ENCODE measurements at regions of chr10 and their contacts with region 1.

Region 1: DNA sequence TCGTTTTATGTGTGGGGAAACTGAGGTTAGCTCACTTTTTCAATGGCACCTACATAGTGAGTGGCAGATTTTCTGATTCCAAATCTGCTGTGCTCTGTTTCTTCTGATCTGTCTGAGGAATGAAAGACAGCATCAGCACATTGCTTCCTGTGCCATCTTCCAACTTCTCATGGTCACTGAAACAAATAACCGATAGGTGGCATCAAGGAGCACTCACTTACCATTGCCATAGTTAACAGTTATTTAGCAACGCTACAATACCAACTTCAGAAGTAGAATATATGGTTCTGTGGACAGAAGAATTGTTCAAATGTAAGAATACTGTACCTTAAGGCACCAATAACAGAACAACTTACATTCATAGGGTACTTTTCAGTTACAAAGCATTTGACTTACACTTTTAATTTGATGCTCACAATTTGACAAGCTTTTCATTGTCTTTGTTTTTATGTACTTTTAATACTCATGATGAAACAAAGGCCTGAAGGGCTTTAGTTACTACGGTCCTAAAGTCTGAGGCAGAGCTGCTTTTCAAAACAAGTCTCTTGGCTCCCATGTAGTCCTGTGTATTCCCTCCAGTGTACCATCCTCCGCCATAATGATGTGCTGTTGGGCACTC is 228.9 kb upstream of the TCF7L2 start:
- DNase-seq: peak; percentile 43 to 72 (median 66)
- H3K4me3 ChIP-seq: no peak overlapping the region
- H3K27ac ChIP-seq: no peak overlapping the region
- H3K4me1 ChIP-seq: no peaks in the 10 kb centered on the region
- H3K27me3 ChIP-seq: no peaks in the 10 kb centered on the region

Region 2: GRCh38 chr10:112698133-112698817 is 22.9 kb before region 1 on chr10:
- CTCF ChIA-PET with region 1: interaction called, 11 read pairs
- POLR2A ChIA-PET with region 1: no interaction called
- DNase-seq: no peak
- H3K4me3 ChIP-seq: no peak overlapping the region
- H3K27ac ChIP-seq: no peak overlapping the region
- H3K4me1 ChIP-seq: no peaks in the 10 kb centered on the region
- H3K27me3 ChIP-seq: no peaks in the 10 kb centered on the region

Region 3: GRCh38 chr10:112842832-112843360 is 121.7 kb after region 1 on chr10:
- CTCF ChIA-PET with region 1: no interaction called
- POLR2A ChIA-PET with region 1: no interaction called
- DNase-seq: no peak
- H3K4me3 ChIP-seq: no peak overlapping the region
- H3K27ac ChIP-seq: no peak overlapping the region
- H3K4me1 ChIP-seq: peaks cover 0 to 15% (median 13%) of the 10 kb centered on the region in 4 experiments
- H3K27me3 ChIP-seq: no peaks in the 10 kb centered on the region

Region 4: GRCh38 chr10:112969542-112969941 is 248.4 kb after region 1 on chr10:
- CTCF ChIA-PET with region 1: no interaction called
- POLR2A ChIA-PET with region 1: no interaction called
- DNase-seq: no peak
- H3K4me3 ChIP-seq: no peak overlapping the region
- H3K27ac ChIP-seq: no peak overlapping the region
- H3K4me1 ChIP-seq: no peaks in the 10 kb centered on the region
- H3K27me3 ChIP-seq: no peaks in the 10 kb centered on the region